Transverse colon (tissue), 4 donors: ENCODE measurements at regions of chr16 and their contacts with region 1.

Region 1: DNA sequence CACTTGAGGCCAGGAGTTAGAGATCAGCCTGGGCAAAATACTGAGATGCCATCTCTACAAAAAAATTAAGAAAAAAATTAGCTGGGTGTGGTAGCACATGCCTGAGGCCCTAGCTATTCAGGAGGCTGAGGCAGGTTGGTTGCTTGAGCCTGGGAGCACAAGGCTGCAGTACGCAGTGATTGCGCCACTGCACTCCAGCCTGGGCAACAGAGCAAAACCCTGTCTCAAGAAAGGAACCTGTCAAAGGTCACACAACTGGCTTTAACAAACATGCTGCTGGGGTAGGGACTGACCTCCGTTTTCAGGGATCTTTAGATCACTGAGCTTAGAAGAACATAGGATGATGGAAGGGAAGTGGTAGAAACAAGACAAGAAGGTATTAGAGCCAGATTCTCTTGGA is 95.0 kb downstream of the IRX3 start:
- DNase-seq: no peak
- H3K4me3 ChIP-seq: no peak overlapping the region
- H3K27ac ChIP-seq: no peak overlapping the region
- H3K4me1 ChIP-seq: no peaks in the 10 kb centered on the region
- H3K27me3 ChIP-seq: peaks cover 22% of the 10 kb centered on the region
- CTCF ChIP-seq: no peak
- EP300 ChIP-seq: no peak
- POLR2A ChIP-seq: no peak

Region 2: DNA sequence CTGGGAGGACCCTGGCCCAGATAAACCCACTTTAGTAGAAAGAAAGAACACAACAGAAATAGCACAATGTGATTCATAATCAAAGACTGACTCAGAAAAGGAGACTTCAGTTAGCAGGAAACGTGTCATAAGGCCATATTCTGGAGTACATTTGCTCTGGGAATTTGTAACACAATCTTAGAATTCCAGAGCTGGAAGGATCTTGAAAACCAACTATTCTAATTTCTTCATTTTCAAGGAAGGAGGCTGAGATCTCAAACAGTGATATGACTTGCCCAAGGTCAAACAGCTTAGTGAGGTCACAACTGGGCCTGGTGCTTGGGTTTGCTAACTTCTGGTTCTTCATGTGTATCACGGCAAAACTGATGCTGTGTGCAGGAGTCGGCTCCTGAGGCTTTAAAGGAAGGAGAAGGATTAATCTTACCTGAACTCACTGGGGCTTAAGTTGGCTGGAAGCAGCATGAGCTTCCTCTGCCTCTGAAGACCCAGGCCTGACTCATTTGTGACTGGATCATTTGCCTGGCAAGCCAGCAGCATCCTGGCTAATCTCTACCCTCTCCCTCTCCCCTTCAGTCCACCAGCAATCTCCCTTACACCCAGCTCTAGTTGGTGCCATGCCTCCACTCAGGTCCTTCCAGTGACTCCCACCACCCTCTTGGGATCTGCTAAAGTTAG is 55.5 kb before region 1 on chr16:
- in situ Hi-C with region 1: no loop called
- intact Hi-C with region 1: no loop called
- DNase-seq: no peak
- H3K4me3 ChIP-seq: no peak overlapping the region
- H3K27ac ChIP-seq: no peak overlapping the region
- H3K4me1 ChIP-seq: no peaks in the 10 kb centered on the region
- H3K27me3 ChIP-seq: no peaks in the 10 kb centered on the region
- CTCF ChIP-seq: no peak
- EP300 ChIP-seq: no peak
- POLR2A ChIP-seq: no peak

Region 3: GRCh38 chr16:54160939-54161897 is 30.4 kb before region 1 on chr16:
- in situ Hi-C with region 1: no loop called
- intact Hi-C with region 1: loop called (anchors 1 kb)
- DNase-seq: no peak
- H3K4me3 ChIP-seq: no peak overlapping the region
- H3K27ac ChIP-seq: no peak overlapping the region
- H3K4me1 ChIP-seq: no peaks in the 10 kb centered on the region
- H3K27me3 ChIP-seq: peaks cover 4% of the 10 kb centered on the region
- CTCF ChIP-seq: no peak
- EP300 ChIP-seq: no peak
- POLR2A ChIP-seq: no peak